Gastrocnemius medialis (tissue), 4 donors: ENCODE measurements at regions of chr1 and their contacts with region 1.

Region 1: DNA sequence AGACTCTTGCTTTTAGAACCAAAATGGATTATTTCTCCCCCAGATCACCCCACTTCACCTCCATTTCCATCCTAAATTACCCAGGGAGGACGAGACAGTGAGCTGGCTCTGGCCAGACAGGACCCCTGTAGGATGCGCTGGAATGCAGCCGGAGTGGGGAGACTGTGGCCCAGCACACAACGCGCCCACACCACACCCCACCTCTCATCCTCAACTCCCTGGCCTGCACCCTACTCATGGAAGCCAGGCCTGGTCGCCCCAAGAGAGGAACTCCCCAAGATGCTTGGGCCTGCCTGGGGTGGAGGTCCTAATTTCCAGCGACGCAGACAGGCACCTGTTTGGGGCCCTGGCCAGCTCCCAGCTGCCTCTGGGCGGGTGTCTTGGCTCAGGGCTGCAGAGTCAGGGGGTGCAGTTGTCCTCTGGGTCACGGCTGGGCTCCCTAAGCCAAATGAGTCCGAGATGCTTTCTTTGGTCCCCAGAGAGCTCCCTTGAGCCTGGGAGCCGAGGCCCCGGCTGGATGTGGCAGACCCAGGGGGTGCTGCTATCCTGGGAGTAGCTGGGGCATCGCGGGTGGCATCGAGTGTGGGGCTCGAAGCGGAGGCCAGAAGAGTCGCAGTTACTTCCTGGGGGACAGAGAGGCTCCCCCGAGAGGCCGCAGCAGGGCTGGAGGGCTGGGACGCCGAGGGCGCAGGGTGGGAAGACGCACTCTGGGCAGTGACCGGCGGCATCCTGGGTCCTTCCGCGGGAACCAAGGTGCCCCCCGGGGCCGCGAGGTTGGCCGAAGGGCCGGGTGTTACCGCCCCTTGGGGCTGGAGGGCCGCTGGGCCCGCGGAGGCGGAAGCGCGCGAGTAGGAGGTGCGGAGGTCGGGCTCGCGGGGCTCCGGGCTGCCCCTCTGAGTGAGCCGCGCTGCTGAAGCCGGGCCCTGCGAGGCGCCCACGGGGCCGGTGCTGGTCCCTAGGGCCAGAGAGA is 10.4 kb downstream of the CLEC20A start:
- DNase-seq: no peak
- ATAC-seq: no peak
- H3K4me3 ChIP-seq: peak overlapping the region; percentile 14 to 46 (median 26)
- H3K27ac ChIP-seq: no peak overlapping the region
- H3K4me1 ChIP-seq: no peaks in the 10 kb centered on the region
- H3K27me3 ChIP-seq: no peaks in the 10 kb centered on the region
- CTCF ChIP-seq: no peak
- POLR2A ChIP-seq: no peak

Region 2: DNA sequence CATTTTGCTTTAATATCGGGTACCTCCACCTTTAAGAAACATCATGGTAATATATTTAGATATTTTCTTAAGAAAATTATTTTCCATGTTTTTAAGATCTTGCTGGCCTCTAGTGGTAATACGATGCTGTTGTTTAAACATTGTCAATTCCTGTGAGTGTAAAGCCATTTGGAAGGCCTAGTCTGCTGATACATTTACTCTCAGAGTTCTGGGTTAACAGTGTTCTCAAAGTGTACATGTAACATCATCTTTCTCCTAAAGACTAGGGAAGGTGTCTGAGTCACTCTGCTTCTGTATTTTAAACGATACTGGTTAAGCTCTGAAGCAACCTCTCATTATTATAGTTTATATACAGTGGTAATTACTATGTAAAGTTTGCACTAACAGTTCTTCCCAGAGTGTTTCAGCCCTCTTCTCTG is 203.4 kb before region 1 on chr1:
- in situ Hi-C with region 1: loop called in 1 of 4 experiments (anchors 25 kb)
- intact Hi-C with region 1: no loop called
- DNase-seq: no peak
- ATAC-seq: no peak
- H3K4me3 ChIP-seq: no peak overlapping the region
- H3K27ac ChIP-seq: no peak overlapping the region
- H3K4me1 ChIP-seq: peaks cover 3% of the 10 kb centered on the region in 2 donors
- H3K27me3 ChIP-seq: no peaks in the 10 kb centered on the region
- CTCF ChIP-seq: peak in 1 of 5 experiments; percentile 35
- POLR2A ChIP-seq: no peak